A549 (cell line): ENCODE measurements at regions of chr7 and their contacts with region 1.

Region 1: GRCh38 chr7:37901236-37901827 is 15.3 kb downstream of the SFRP4 start:
- DNase-seq: peak; percentile 51 to 83
- ATAC-seq: peak; percentile 78 to 81
- H3K4me3 ChIP-seq: peak overlapping the region; percentile 35
- H3K27ac ChIP-seq: peak overlapping the region; percentile 87 to 96
- H3K4me1 ChIP-seq: peaks cover 49% of the 10 kb centered on the region
- CTCF ChIP-seq: peak; percentile 88
- EP300 ChIP-seq: no peak
- POLR2A ChIP-seq: no peak
- RAD21 ChIP-seq: peak; percentile 89 to 92

Region 2: DNA sequence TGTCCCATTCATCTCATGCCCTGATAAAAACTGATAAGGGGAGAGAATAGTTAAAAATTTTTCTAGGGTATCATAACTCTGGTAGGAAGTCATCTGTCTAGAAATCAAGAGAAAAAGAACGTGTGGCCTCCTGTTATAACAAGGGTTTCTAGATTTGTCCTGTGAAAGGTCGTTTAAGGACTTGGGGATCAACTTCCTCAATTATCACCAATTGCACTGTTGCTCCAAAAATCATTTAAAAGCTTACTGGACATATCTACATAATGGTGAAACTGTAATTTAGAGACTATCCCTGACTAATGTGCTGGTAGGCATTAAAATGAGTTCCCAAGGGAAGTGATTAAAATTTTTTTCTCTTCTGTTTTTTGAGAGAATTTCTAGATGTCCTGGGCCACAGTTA is 159.6 kb before region 1 on chr7:
- CTCF ChIA-PET with region 1: no interaction called
- POLR2A ChIA-PET with region 1: no interaction called
- DNase-seq: no peak
- ATAC-seq: no peak
- H3K4me3 ChIP-seq: no peak overlapping the region
- H3K27ac ChIP-seq: no peak overlapping the region
- H3K4me1 ChIP-seq: no peaks in the 10 kb centered on the region
- CTCF ChIP-seq: no peak
- EP300 ChIP-seq: no peak
- POLR2A ChIP-seq: no peak
- RAD21 ChIP-seq: no peak

Region 3: GRCh38 chr7:37977243-37977642 is 75.9 kb after region 1 on chr7:
- CTCF ChIA-PET with region 1: no interaction called
- POLR2A ChIA-PET with region 1: no interaction called
- DNase-seq: peak in 1 of 2 experiments; percentile 47
- ATAC-seq: peak; percentile 75 to 77
- H3K4me3 ChIP-seq: no peak overlapping the region
- H3K27ac ChIP-seq: no peak overlapping the region
- H3K4me1 ChIP-seq: peaks cover 9% of the 10 kb centered on the region; the same call in 2 of the 3 replicates
- CTCF ChIP-seq: no peak
- EP300 ChIP-seq: no peak
- POLR2A ChIP-seq: no peak
- RAD21 ChIP-seq: no peak

Region 4: GRCh38 chr7:38195804-38196595 is 294.7 kb after region 1 on chr7:
- CTCF ChIA-PET with region 1: interaction called, 15 read pairs
- POLR2A ChIA-PET with region 1: no interaction called
- DNase-seq: peak in 1 of 2 experiments; percentile 20
- ATAC-seq: peak; percentile 52 to 66; a peak in 4 of 6 replicates
- H3K4me3 ChIP-seq: no peak overlapping the region
- H3K27ac ChIP-seq: peak overlapping the region; percentile 53 to 78
- H3K4me1 ChIP-seq: peaks cover 38% of the 10 kb centered on the region
- CTCF ChIP-seq: no peak
- EP300 ChIP-seq: no peak
- POLR2A ChIP-seq: no peak
- RAD21 ChIP-seq: no peak

Region 5: GRCh38 chr7:38222481-38223096 is 321.3 kb after region 1 on chr7:
- CTCF ChIA-PET with region 1: interaction called, 47 read pairs
- POLR2A ChIA-PET with region 1: no interaction called
- DNase-seq: peak; percentile 48 to 67
- ATAC-seq: peak; percentile 81 to 84; a peak in 5 of 6 replicates
- H3K4me3 ChIP-seq: no peak overlapping the region
- H3K27ac ChIP-seq: no peak overlapping the region
- H3K4me1 ChIP-seq: peaks cover 4% of the 10 kb centered on the region; the same call in 2 of the 3 replicates
- CTCF ChIP-seq: peak; percentile 95
- EP300 ChIP-seq: no peak
- POLR2A ChIP-seq: no peak
- RAD21 ChIP-seq: peak; percentile 89 to 90

Region 6: GRCh38 chr7:38318803-38319416 is 417.6 kb after region 1 on chr7:
- CTCF ChIA-PET with region 1: interaction called, 17 read pairs
- POLR2A ChIA-PET with region 1: no interaction called
- DNase-seq: peak; percentile 61 to 79
- ATAC-seq: peak; percentile 95 to 98
- H3K4me3 ChIP-seq: no peak overlapping the region
- H3K27ac ChIP-seq: no peak overlapping the region
- H3K4me1 ChIP-seq: peaks cover 13% of the 10 kb centered on the region; the same call in 2 of the 3 replicates
- CTCF ChIP-seq: peak; percentile 74
- EP300 ChIP-seq: no peak
- POLR2A ChIP-seq: no peak
- RAD21 ChIP-seq: peak; percentile 80 to 86

Region 7: DNA sequence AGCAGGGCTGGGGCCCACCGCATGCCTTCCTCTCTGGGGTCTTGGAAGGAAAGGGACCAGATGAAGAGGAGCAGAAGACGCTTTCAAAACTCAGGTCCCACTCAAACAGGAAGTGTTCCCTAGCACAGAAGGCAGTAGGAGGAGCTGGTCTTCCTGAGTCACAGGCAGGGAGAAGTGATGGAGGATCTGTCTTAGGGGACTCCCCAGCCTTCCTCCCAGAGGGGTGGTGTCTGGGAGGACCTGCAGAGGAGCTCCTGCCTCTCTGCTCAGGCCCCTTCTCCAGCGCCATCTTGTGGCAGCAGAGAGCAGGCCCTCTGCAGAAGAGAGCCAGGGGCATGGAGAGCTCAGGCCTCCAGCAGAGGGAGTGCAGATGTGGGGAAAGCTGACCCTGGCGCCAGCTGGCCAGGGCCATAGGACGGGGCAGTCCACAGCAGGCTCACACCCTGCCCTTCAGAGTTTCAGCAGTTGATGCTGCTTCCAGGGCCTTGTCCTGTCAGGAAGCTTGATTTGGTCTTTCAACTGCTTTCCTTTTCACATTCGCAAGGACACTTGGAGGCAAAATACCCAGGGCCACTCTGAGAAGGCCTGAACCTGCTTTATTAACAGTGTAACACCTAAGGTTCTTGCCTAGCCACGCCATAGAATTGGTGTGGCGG is 434.3 kb after region 1 on chr7:
- CTCF ChIA-PET with region 1: interaction called, 13 read pairs
- POLR2A ChIA-PET with region 1: no interaction called
- DNase-seq: peak; percentile 56 to 89
- ATAC-seq: peak; percentile 98 to 100
- H3K4me3 ChIP-seq: no peak overlapping the region
- H3K27ac ChIP-seq: 0 out of 6 replicates have a peak overlapping the region, but pooled peaks of 1 of the 2 experiments have one; percentile 42
- H3K4me1 ChIP-seq: no peaks in the 10 kb centered on the region
- CTCF ChIP-seq: peak; percentile 89
- EP300 ChIP-seq: no peak
- POLR2A ChIP-seq: no peak
- RAD21 ChIP-seq: peak; percentile 60 to 63; a peak in 4 of 5 replicates

Region 8: GRCh38 chr7:38369816-38370493 is 468.6 kb after region 1 on chr7:
- CTCF ChIA-PET with region 1: interaction called, 18 read pairs
- POLR2A ChIA-PET with region 1: no interaction called
- DNase-seq: peak; percentile 81 to 90
- ATAC-seq: peak; percentile 96 to 98
- H3K4me3 ChIP-seq: no peak overlapping the region
- H3K27ac ChIP-seq: no peak overlapping the region
- H3K4me1 ChIP-seq: no peaks in the 10 kb centered on the region
- CTCF ChIP-seq: peak; percentile 76
- EP300 ChIP-seq: no peak
- POLR2A ChIP-seq: no peak
- RAD21 ChIP-seq: peak; percentile 8 to 27; a peak in 2 of 5 replicates